Calu3 (cell line): ENCODE measurements at regions of chr19 and their contacts with region 1.

Region 1: DNA sequence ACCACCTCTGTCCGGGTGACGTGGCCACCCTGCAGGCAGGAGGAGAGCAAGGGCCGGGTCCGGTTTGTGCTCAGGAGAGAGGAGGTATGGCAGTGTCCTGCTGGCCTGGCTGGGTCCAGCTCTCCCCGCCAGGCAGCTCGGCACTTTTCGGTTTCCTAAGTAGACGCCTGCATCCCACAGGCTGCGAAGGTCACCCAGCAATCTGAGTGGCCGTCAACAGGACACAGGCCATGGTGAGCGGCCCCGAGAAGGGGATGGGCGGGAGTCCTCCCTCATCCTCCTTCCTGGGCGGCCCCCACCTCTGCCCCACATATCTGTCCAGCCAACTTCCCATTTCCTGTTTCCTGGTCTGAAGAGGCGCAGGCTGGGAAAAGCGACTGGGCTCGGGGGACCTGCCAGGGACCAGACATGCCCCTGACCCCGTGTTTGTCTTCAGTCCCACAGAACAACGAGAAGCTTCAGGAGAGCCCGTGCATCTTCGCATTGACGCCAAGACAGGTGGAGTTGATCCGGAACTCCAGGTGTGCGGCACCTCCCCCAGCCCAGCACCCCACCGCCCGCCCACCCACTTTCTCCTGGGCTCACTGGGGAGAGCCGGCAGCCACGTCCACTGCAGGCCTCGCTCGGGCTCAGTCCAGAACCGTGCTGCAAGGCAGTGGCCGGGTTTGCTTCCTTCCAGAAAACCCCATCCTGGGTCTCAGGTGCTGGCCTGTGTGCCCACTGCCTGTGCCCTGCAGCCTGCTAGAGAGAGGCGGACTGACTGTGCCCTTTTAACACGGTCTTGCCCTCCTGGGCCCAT is 16.3 kb downstream of the PIAS4 start:
- DNase-seq: no peak
- H3K4me3 Mint-ChIP-seq: no peak overlapping the region
- H3K27ac Mint-ChIP-seq: no peak overlapping the region
- H3K4me1 Mint-ChIP-seq: no peaks in the 10 kb centered on the region
- H3K27me3 Mint-ChIP-seq: no peaks in the 10 kb centered on the region
- CTCF ChIP-seq: no peak

Region 2: GRCh38 chr19:3968556-3969434 is 55.0 kb before region 1 on chr19:
- CTCF ChIA-PET with region 1: interaction called, 10 read pairs
- intact Hi-C with region 1: no loop called
- DNase-seq: peak; percentile 88
- H3K4me3 Mint-ChIP-seq: peak overlapping the region; percentile 78
- H3K27ac Mint-ChIP-seq: peak overlapping the region; percentile 72
- H3K4me1 Mint-ChIP-seq: peaks cover 14% of the 10 kb centered on the region
- H3K27me3 Mint-ChIP-seq: no peaks in the 10 kb centered on the region
- CTCF ChIP-seq: no peak

Region 3: DNA sequence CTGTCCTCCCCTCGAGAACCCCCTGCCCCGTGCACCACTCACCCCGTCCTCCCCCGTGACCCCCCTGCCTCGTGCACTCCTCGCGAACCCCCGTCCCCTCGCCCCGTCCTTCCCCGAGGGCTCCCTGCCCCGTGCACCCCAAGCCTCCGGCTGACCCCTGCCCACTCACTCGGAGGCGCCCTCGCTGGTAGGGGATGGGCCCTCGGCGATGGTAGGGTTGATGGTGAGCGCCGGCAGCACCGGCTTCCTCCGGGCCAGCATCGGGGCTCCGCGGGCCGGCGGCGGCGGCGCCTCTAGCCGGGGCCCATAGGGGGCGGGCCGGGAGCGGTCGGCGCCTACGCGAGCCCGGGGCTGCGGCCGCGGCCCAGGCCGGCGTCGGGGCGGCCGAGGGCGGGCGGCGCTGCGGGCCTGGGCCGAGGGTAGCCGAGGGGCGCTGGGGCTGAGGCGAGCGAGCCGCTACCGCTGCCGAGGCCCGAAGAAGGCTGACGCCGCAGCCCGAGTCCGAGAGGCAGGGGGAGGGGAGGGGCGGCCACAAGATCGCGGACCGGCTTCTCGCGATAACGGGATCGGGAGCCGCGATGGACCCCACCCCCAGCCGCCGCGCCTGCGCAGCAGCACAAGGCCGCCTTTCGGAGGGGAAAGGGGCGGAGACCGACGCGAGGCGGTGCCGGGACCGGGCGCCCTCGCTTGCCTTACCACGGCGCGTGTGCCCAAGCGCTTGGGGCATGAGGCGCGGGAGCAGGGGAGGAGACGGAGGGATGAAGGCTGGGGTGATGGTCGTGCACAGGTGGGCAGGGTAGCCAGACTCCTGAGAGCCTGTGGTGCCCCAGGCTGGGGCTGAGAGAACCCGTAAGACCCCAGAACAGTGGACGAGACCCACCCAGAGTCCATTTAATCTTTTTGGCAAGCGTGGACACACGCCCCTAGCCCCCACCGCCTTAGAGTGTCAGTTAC is 100.1 kb after region 1 on chr19 and contains the start of gene MAP2K2:
- CTCF ChIA-PET with region 1: no interaction called
- intact Hi-C with region 1: no loop called
- DNase-seq: peak; percentile 93
- H3K4me3 Mint-ChIP-seq: peak within 1 kb of the TSS; percentile 91
- H3K27ac Mint-ChIP-seq: peak within 1 kb of the TSS; percentile 92
- H3K4me1 Mint-ChIP-seq: peaks cover 21% of the 10 kb centered on the region
- H3K27me3 Mint-ChIP-seq: no peaks in the 10 kb centered on the region
- CTCF ChIP-seq: no peak
- total RNA-seq, gene MAP2K2: 113 and 114 TPM in 2 replicates